T-cell (primary cell): ENCODE measurements at regions of chr9 and their contacts with region 1.

Region 1: GRCh38 chr9:126240835-126241234 is 85.8 kb upstream of the MVB12B start:
- DNase-seq: no peak
- ATAC-seq: no peak
- H3K4me3 ChIP-seq: no peak overlapping the region
- H3K4me3 Mint-ChIP-seq: no peak overlapping the region
- H3K27ac ChIP-seq: no peak overlapping the region
- H3K27ac Mint-ChIP-seq: no peak overlapping the region
- H3K4me1 ChIP-seq: no peaks in the 10 kb centered on the region
- H3K4me1 Mint-ChIP-seq: no peaks in the 10 kb centered on the region
- H3K27me3 ChIP-seq: peaks cover 0 to 18% of the 10 kb centered on the region in 2 experiments
- H3K27me3 Mint-ChIP-seq: peaks cover 18 to 20% of the 10 kb centered on the region in 2 donors

Region 2: GRCh38 chr9:126261584-126262356 is 20.9 kb after region 1 on chr9:
- CTCF ChIA-PET with region 1: no interaction called
- POLR2A ChIA-PET with region 1: no interaction called
- DNase-seq: no peak
- ATAC-seq: no peak
- H3K4me3 ChIP-seq: no peak overlapping the region
- H3K4me3 Mint-ChIP-seq: no peak overlapping the region
- H3K27ac ChIP-seq: no peak overlapping the region
- H3K27ac Mint-ChIP-seq: no peak overlapping the region
- H3K4me1 ChIP-seq: no peaks in the 10 kb centered on the region
- H3K4me1 Mint-ChIP-seq: peaks cover 5 to 8% (median 7%) of the 10 kb centered on the region in 3 donors
- H3K27me3 ChIP-seq: peaks cover 10 to 11% of the 10 kb centered on the region in 2 experiments
- H3K27me3 Mint-ChIP-seq: peaks cover 33 to 46% of the 10 kb centered on the region in 2 donors

Region 3: DNA sequence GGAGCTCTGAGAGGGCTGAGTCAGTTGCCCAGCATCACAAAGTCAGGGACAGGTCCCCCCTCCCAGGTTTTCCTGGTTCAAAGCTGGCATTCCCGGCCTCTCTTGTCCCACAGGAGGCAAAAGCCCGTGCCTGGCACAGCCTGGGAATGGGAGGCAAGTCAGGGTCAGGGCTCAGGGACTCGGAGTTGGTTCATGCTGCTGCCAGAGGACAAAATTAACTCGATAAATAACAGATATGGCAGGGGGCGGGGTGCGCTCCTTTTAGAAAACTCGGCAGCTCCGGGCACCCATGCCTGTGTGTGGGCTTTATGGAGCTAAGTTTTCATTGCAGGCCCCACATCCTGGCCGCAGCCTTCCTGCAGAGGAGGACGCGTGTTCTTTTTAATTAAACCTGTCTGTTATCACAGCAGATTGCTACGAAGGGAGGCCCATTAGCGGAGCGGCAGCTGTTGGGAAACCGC is 310.1 kb after region 1 on chr9:
- CTCF ChIA-PET with region 1: interaction called in 1 of 2 experiments, 11 read pairs
- POLR2A ChIA-PET with region 1: no interaction called
- DNase-seq: no peak
- ATAC-seq: no peak
- H3K4me3 ChIP-seq: no peak overlapping the region
- H3K4me3 Mint-ChIP-seq: no peak overlapping the region
- H3K27ac ChIP-seq: no peak overlapping the region
- H3K27ac Mint-ChIP-seq: no peak overlapping the region
- H3K4me1 ChIP-seq: no peaks in the 10 kb centered on the region
- H3K4me1 Mint-ChIP-seq: no peaks in the 10 kb centered on the region
- H3K27me3 ChIP-seq: peaks cover 0 to 7% of the 10 kb centered on the region in 2 experiments
- H3K27me3 Mint-ChIP-seq: peaks cover 0 to 4% of the 10 kb centered on the region in 2 donors